ENCODE measurements at regions of chr1 and their contacts with region 1.

Region 1: DNA sequence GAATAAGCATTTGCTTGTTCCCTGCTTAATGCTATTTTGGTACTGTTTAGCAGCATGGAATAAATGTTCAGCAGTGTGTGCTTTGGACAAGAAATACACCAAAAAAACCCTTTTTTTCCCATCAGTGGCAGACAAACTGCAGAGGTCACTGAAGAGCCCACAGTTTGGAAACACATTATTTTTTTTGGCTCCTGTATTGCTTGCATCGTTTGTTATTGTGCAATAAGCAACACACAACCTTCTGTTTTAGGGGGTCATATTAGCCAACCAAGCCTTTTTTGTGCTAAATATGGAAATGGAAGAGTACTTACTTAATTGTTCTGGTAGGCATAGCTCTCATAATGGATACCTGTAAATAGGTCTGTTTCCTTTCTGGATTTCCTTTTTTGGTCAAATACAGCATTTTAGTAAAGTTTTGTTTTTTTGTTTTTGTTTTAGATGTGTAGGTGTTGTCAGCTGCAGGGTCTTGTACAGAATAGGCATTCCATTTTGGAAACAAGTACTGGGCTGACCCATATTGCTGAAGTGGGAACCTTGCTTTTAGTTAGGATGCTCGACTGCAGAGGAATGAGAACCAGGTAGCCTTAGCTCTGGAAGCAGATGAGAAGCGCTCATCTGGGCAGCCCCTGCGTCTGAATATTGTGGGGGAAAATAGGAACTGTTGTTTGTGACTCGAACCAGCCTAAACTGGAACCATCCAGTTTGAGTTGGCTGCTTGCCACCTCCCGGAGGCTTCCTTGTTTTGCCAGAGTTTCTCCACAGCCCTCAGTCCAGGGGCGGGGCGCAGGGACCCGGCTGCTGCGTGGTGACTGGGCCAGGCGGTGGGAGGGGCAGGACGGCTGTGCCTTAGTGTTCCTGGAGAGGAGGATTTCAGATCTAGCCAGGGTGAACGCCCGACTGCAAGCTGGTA is 38.4 kb downstream of the SPEN start:
- DNase-seq: peak; percentile 98

Region 2: GRCh38 chr1:15835741-15836510 is 50.0 kb before region 1 on chr1:
- intact Hi-C with region 1: loop called (anchors 1 kb)
- DNase-seq: peak; percentile 100

Region 3: DNA sequence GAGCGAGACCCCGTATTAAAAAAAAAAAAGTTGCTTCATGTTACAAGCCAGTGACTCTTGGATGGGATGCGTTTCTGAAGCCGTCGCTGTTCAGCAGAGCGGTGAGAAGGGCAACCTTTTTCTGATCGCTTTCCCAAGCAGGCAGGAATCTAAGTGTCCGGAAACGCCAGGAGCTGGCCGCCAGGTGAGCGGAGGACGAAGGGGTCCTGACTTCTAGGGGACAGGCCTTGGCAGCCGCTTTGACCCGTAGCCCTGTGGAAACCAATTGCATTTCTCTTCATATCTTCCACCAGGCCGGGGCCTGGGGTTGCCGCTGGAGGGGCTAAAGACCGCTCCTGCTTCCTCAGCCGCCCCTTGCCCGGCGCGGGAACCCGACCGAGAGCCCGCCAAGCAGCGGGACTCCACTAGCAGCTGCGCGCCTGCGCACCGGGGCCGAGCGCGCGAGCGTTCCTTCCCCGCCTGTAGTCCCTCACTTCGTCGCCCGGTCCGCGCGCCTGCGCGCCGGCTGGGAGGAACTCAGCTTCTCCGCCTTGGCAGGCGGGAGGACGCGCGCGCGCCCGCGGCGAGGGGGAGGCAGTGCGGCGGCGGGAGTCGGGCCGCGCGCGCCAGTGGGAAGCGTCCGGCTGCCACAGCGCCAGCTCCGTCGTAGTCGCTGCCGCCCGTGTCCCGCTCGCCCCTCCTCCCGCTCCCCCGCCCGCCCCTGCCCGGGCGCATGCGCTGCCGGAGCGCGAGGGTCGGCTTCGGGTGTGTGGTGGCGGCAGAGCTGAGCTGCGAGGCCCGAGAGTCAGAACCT is 38.7 kb before region 1 on chr1 and contains the start of gene SPEN:
- intact Hi-C with region 1: loop called (anchors 2 kb)
- DNase-seq: peak; percentile 99
- total RNA-seq, gene SPEN: 37.8 TPM

Region 4: GRCh38 chr1:15949453-15950245 is 63.7 kb after region 1 on chr1:
- intact Hi-C with region 1: loop called (anchors 5 kb)
- DNase-seq: peak; percentile 91